ENCODE measurements at regions of chr13 and their contacts with region 1.

Region 1: DNA sequence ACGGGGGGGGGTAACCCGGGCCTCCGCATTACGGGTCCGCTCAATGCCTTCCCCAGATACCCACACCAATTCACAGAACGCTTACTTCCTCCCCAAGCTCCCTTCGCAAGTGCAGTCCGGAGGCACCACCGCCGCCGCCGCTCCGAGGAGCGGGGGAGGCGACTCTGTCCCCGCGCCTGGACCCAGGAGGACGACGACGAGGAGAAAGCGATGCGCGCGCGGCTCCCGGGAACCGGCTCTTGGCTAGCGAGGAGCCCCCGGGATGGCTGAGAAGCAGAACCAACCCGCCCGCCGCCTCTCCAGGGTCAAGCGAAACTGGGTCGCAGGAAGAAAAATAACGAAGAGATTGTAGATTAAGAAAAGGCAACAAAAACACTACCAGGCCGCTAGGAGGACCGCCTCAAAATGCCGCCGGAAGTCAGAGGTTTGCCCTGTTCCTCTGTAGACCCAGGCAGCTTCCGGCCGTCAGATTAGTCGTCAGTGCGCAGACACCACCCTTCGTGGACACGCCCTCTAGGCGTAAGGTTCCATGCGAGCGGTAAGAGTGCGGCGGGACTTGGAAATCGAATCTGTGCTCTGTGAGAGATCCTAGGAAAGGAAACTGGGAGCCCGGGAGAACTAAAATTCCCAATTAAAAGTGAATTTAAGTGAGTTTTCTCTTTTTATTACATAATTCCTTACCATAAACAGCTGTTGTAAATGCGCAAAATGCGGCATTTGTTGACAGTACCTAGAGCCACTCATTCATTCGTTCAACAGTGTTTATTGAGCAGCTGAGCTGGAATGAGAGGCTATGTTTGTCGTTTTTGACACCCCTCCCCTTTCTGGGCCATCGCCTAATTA is at the start of gene ZC3H13:
- DNase-seq: peak; percentile 84 to 97 (median 91)
- ATAC-seq: peak; percentile 97
- H3K4me3 ChIP-seq: peak within 1 kb of the TSS; percentile 77 to 89
- H3K4me3 Mint-ChIP-seq: peak within 1 kb of the TSS; percentile 88
- H3K27ac ChIP-seq: peak within 1 kb of the TSS; percentile 89 to 98
- H3K27ac Mint-ChIP-seq: peak within 1 kb of the TSS; percentile 94
- H3K4me1 ChIP-seq: peaks cover 23% of the 10 kb centered on the region
- H3K4me1 Mint-ChIP-seq: peaks cover 46% of the 10 kb centered on the region
- H3K27me3 ChIP-seq: no peaks in the 10 kb centered on the region
- H3K27me3 Mint-ChIP-seq: peaks cover 6% of the 10 kb centered on the region
- CTCF ChIP-seq: peak; percentile 37
- total RNA-seq, gene ZC3H13: 50.7 to 54.2 TPM

Region 2: GRCh38 chr13:44988973-44989817 is 1063.3 kb before region 1 on chr13 and contains the starts of genes GPALPP1 and NUFIP1:
- CTCF ChIA-PET with region 1: no interaction called
- POLR2A ChIA-PET with region 1: no interaction called
- intact Hi-C with region 1: loop called in 1 of 2 experiments (anchors 2 kb)
- DNase-seq: peak; percentile 79 to 96 (median 93)
- ATAC-seq: peak; percentile 94
- H3K4me3 ChIP-seq: peak within 1 kb of the TSS; percentile 88 to 92
- H3K4me3 Mint-ChIP-seq: peak within 1 kb of the TSS; percentile 100
- H3K27ac ChIP-seq: peak within 1 kb of the TSS; percentile 86 to 90
- H3K27ac Mint-ChIP-seq: peak within 1 kb of the TSS; percentile 99
- H3K4me1 ChIP-seq: peaks cover 20% of the 10 kb centered on the region
- H3K4me1 Mint-ChIP-seq: peaks cover 64% of the 10 kb centered on the region
- H3K27me3 ChIP-seq: no peaks in the 10 kb centered on the region
- H3K27me3 Mint-ChIP-seq: no peaks in the 10 kb centered on the region
- CTCF ChIP-seq: no peak
- total RNA-seq, gene GPALPP1: 16.7 to 17.8 TPM
- total RNA-seq, gene NUFIP1: 5.2 to 6.1 TPM

Region 3: GRCh38 chr13:45417790-45418534 is 634.6 kb before region 1 on chr13 and contains the start of gene SLC25A30:
- CTCF ChIA-PET with region 1: no interaction called
- POLR2A ChIA-PET with region 1: no interaction called
- intact Hi-C with region 1: loop called in 1 of 2 experiments (anchors 2 kb)
- DNase-seq: peak; percentile 83 to 96 (median 91)
- ATAC-seq: peak; percentile 90
- H3K4me3 ChIP-seq: peak within 1 kb of the TSS; percentile 88 to 97
- H3K4me3 Mint-ChIP-seq: peak within 1 kb of the TSS; percentile 94
- H3K27ac ChIP-seq: peak within 1 kb of the TSS; percentile 81 to 85
- H3K27ac Mint-ChIP-seq: peak within 1 kb of the TSS; percentile 96
- H3K4me1 ChIP-seq: peaks cover 24% of the 10 kb centered on the region
- H3K4me1 Mint-ChIP-seq: peaks cover 32% of the 10 kb centered on the region
- H3K27me3 ChIP-seq: no peaks in the 10 kb centered on the region
- H3K27me3 Mint-ChIP-seq: no peaks in the 10 kb centered on the region
- CTCF ChIP-seq: no peak
- total RNA-seq, gene SLC25A30: 37.7 to 40.5 TPM

Region 4: GRCh38 chr13:46211483-46212351 is 159.2 kb after region 1 on chr13 and contains the start of gene LRRC63:
- CTCF ChIA-PET with region 1: no interaction called
- POLR2A ChIA-PET with region 1: interaction called, 4 read pairs
- intact Hi-C with region 1: loop called in 1 of 2 experiments (anchors 1 kb)
- DNase-seq: peak; percentile 58 to 91 (median 84)
- ATAC-seq: peak; percentile 92
- H3K4me3 ChIP-seq: peak within 1 kb of the TSS; percentile 69 to 73
- H3K4me3 Mint-ChIP-seq: peak within 1 kb of the TSS; percentile 86
- H3K27ac ChIP-seq: peak within 1 kb of the TSS; percentile 74 to 90
- H3K27ac Mint-ChIP-seq: peak within 1 kb of the TSS; percentile 93
- H3K4me1 ChIP-seq: peaks cover 13% of the 10 kb centered on the region
- H3K4me1 Mint-ChIP-seq: peaks cover 19% of the 10 kb centered on the region
- H3K27me3 ChIP-seq: no peaks in the 10 kb centered on the region
- H3K27me3 Mint-ChIP-seq: no peaks in the 10 kb centered on the region
- CTCF ChIP-seq: no peak
- total RNA-seq, gene LRRC63: 0.22 to 0.31 TPM

Region 5: GRCh38 chr13:46796515-46797474 is 744.3 kb after region 1 on chr13 and contains the start of gene ESD:
- CTCF ChIA-PET with region 1: no interaction called
- POLR2A ChIA-PET with region 1: no interaction called
- intact Hi-C with region 1: loop called in 1 of 2 experiments (anchors 10 kb)
- DNase-seq: peak; percentile 74 to 92 (median 89)
- ATAC-seq: peak; percentile 94
- H3K4me3 ChIP-seq: peak within 1 kb of the TSS; percentile 76 to 93
- H3K4me3 Mint-ChIP-seq: peak within 1 kb of the TSS; percentile 99
- H3K27ac ChIP-seq: peak within 1 kb of the TSS; percentile 71 to 77
- H3K27ac Mint-ChIP-seq: peak within 1 kb of the TSS; percentile 99
- H3K4me1 ChIP-seq: peaks cover 35% of the 10 kb centered on the region
- H3K4me1 Mint-ChIP-seq: peaks cover 44% of the 10 kb centered on the region
- H3K27me3 ChIP-seq: no peaks in the 10 kb centered on the region
- H3K27me3 Mint-ChIP-seq: no peaks in the 10 kb centered on the region
- CTCF ChIP-seq: no peak
- total RNA-seq, gene ESD: 30.5 to 31.0 TPM